GM12878 (cell line): ENCODE measurements at regions of chr2 and their contacts with region 1.

Region 1: GRCh38 chr2:143217512-143218115 is 88.4 kb downstream of the ARHGAP15 start:
- DNase-seq: no peak
- ATAC-seq: no peak
- H3K4me3 ChIP-seq: no peak overlapping the region
- H3K27ac ChIP-seq: no peak overlapping the region
- H3K4me1 ChIP-seq: no peaks in the 10 kb centered on the region
- H3K27me3 ChIP-seq: no peaks in the 10 kb centered on the region
- CTCF ChIP-seq: no peak
- EP300 ChIP-seq: no peak
- POLR2A ChIP-seq: no peak
- RAD21 ChIP-seq: no peak

Region 2: GRCh38 chr2:142803158-142803557 is 414.5 kb before region 1 on chr2:
- CTCF ChIA-PET with region 1: no interaction called
- POLR2A ChIA-PET with region 1: no interaction called
- RAD21 ChIA-PET with region 1: no interaction called
- SMC1A ChIA-PET with region 1: no interaction called
- in situ Hi-C with region 1: no loop called
- intact Hi-C with region 1: no loop called
- DNase-seq: no peak
- ATAC-seq: no peak
- H3K4me3 ChIP-seq: no peak overlapping the region
- H3K27ac ChIP-seq: no peak overlapping the region
- H3K4me1 ChIP-seq: no peaks in the 10 kb centered on the region
- H3K27me3 ChIP-seq: no peaks in the 10 kb centered on the region
- CTCF ChIP-seq: no peak
- EP300 ChIP-seq: no peak
- POLR2A ChIP-seq: no peak
- RAD21 ChIP-seq: no peak

Region 3: DNA sequence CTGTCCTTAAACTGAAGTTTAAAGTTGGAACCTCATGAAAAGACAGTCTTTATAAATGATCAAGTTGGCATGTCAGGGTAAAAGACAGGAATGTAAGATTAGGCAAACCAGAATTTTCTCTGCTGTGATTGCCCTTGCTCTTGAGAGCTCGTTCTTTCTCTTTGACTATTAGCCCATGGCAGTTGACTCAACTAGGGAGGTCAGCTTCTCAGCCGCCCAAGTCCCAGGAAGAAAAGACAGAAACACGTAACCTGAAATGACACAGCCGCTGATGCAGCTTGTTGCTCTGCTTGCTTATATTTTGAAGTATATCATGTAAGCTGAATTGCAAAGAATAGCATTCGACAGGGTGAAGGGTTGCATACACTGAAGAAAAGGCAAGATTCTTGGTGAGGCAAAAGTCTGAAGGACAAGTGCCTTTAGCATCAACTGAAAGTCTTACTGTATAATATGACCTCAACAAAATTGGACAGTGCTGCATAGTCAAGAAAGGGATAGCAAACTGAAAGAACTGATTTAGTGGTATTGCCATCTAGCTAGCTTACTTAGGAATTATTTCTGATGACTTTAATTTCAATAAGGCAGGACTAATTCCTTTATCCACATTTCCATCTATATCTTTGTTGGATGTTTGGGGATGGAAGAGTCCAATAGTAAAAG is 33.7 kb before region 1 on chr2:
- CTCF ChIA-PET with region 1: interaction called, 14 read pairs
- POLR2A ChIA-PET with region 1: no interaction called
- RAD21 ChIA-PET with region 1: no interaction called
- SMC1A ChIA-PET with region 1: interaction called, 7 read pairs
- in situ Hi-C with region 1: no loop called
- intact Hi-C with region 1: no loop called
- DNase-seq: peak; percentile 27
- ATAC-seq: peak; percentile 80
- H3K4me3 ChIP-seq: no peak overlapping the region
- H3K27ac ChIP-seq: peak overlapping the region; percentile 6; the same call in 1 of the 2 replicates
- H3K4me1 ChIP-seq: peaks cover 9% of the 10 kb centered on the region
- H3K27me3 ChIP-seq: no peaks in the 10 kb centered on the region
- CTCF ChIP-seq: no peak
- EP300 ChIP-seq: no peak
- POLR2A ChIP-seq: no peak
- RAD21 ChIP-seq: no peak

Region 4: DNA sequence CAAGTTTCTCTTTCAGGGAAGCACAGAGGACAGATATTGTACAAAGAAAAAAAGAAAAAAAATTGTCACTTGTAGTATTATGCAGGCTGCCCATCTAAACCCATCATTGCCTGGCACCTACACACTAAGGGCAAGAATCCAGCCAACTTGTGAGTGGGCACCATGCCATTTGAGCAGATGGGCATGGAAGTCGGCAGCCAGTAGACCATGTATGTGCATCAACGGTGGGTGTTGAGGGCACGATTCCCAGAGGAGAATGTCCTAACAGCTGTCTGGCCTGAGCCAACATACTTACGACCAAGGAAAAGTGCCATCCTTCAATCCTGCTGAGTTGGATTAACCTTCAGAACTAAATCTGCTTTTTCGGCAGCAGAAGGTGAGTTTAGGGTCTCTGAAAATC is 24.5 kb before region 1 on chr2:
- CTCF ChIA-PET with region 1: interaction called, 11 read pairs
- POLR2A ChIA-PET with region 1: no interaction called
- RAD21 ChIA-PET with region 1: no interaction called
- SMC1A ChIA-PET with region 1: interaction called, 10 read pairs
- in situ Hi-C with region 1: no loop called
- intact Hi-C with region 1: no loop called
- DNase-seq: no peak
- ATAC-seq: no peak
- H3K4me3 ChIP-seq: no peak overlapping the region
- H3K27ac ChIP-seq: no peak overlapping the region
- H3K4me1 ChIP-seq: no peaks in the 10 kb centered on the region
- H3K27me3 ChIP-seq: no peaks in the 10 kb centered on the region
- CTCF ChIP-seq: no peak
- EP300 ChIP-seq: no peak
- POLR2A ChIP-seq: no peak
- RAD21 ChIP-seq: no peak

Region 5: DNA sequence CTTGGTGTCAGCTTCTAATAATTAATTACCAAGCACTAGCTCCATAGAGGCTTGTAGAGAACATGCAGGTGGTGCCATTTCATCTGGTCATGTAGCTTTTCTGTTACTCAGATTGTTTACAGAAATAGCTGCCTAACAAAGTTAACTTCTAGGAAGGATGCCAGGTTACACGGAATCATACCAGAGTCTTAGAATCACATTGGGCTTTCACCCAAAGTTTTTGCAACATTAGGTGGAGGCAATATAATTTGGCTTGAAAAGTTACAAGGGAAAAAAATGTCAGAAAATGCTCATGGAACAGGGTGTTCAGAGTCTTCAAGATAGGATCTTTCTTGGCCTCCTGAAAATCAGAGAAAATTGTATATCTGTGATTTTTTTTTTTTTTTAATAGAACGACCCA is 47.2 kb after region 1 on chr2:
- CTCF ChIA-PET with region 1: interaction called, 18 read pairs
- POLR2A ChIA-PET with region 1: no interaction called
- RAD21 ChIA-PET with region 1: interaction called, 23 read pairs
- SMC1A ChIA-PET with region 1: interaction called, 21 read pairs
- in situ Hi-C with region 1: no loop called
- intact Hi-C with region 1: no loop called
- DNase-seq: no peak
- ATAC-seq: no peak
- H3K4me3 ChIP-seq: no peak overlapping the region
- H3K27ac ChIP-seq: no peak overlapping the region
- H3K4me1 ChIP-seq: peaks cover 5% of the 10 kb centered on the region; the same call in 1 of the 2 replicates
- H3K27me3 ChIP-seq: no peaks in the 10 kb centered on the region
- CTCF ChIP-seq: no peak
- EP300 ChIP-seq: no peak
- POLR2A ChIP-seq: no peak
- RAD21 ChIP-seq: no peak

Region 6: DNA sequence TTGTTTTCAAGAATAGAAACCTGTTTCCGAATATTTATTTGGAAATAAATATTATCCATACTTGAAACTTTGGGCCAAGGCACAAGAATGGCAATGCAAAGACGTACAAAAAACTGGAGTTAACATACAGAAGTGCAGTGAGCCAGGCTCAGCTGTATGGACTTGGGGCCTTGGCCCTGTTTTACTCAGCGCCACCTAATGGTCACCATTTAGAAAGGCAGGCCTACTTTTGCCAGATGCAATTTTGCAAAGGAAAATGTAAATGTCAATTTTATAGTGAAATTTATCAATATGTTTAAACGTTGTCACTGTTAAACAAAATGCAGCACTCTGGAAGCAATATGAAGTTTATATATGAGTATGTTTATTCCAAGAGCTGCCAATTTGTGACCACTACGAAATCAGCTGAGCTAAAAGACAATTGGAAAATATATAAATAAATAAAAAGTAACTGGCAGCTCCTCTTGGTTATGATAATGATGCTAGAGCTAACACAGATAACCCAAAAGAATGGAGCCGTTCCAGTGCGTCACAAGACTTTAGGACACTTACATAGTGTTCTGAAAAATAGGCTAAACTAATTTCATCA is 66.6 kb after region 1 on chr2:
- CTCF ChIA-PET with region 1: interaction called, 10 read pairs
- POLR2A ChIA-PET with region 1: no interaction called
- RAD21 ChIA-PET with region 1: interaction called, 5 read pairs
- SMC1A ChIA-PET with region 1: no interaction called
- in situ Hi-C with region 1: no loop called
- intact Hi-C with region 1: no loop called
- DNase-seq: no peak
- ATAC-seq: peak; percentile 88
- H3K4me3 ChIP-seq: no peak overlapping the region
- H3K27ac ChIP-seq: no peak overlapping the region
- H3K4me1 ChIP-seq: no peaks in the 10 kb centered on the region
- H3K27me3 ChIP-seq: no peaks in the 10 kb centered on the region
- CTCF ChIP-seq: peak; percentile 57 to 85 (median 77)
- EP300 ChIP-seq: no peak
- POLR2A ChIP-seq: no peak
- RAD21 ChIP-seq: peak; percentile 35; the same call in 1 of the 2 replicates

Region 7: GRCh38 chr2:143819190-143819735 is 601.6 kb after region 1 on chr2:
- CTCF ChIA-PET with region 1: no interaction called
- POLR2A ChIA-PET with region 1: no interaction called
- RAD21 ChIA-PET with region 1: no interaction called
- SMC1A ChIA-PET with region 1: no interaction called
- in situ Hi-C with region 1: no loop called
- intact Hi-C with region 1: no loop called
- DNase-seq: no peak
- ATAC-seq: no peak
- H3K4me3 ChIP-seq: no peak overlapping the region
- H3K27ac ChIP-seq: no peak overlapping the region
- H3K4me1 ChIP-seq: no peaks in the 10 kb centered on the region
- H3K27me3 ChIP-seq: no peaks in the 10 kb centered on the region; a peak in 2 of 4 replicates
- CTCF ChIP-seq: no peak
- EP300 ChIP-seq: no peak
- POLR2A ChIP-seq: no peak
- RAD21 ChIP-seq: no peak